ENCODE measurements at regions of chr3 and their contacts with region 1.

Region 1: GRCh38 chr3:44729384-44729910 is at the start of gene ZNF501:
- DNase-seq: peak; percentile 85 to 97 (median 92)
- H3K4me3 ChIP-seq: peak within 1 kb of the TSS; percentile 50 to 92 (median 77)
- H3K27ac ChIP-seq: peak within 1 kb of the TSS in 8 of 59 donors; percentile 1 to 61 (median 30)
- H3K27me3 ChIP-seq: no peaks in the 10 kb centered on the region
- CTCF ChIP-seq: peak in 24 of 56 donors; percentile 7 to 50 (median 21)
- total RNA-seq, gene ZNF501: 2.2 to 12.3 (median 6.1) TPM

Region 2: GRCh38 chr3:44712455-44713075 is 16.9 kb before region 1 on chr3 and contains the start of gene ZNF502:
- intact Hi-C with region 1: loop called (anchors 1 kb)
- DNase-seq: peak; percentile 86 to 95 (median 92)
- H3K4me3 ChIP-seq: peak within 1 kb of the TSS; percentile 54 to 99 (median 84)
- H3K27ac ChIP-seq: peak within 1 kb of the TSS in 26 of 59 donors; percentile 1 to 81 (median 50)
- H3K27me3 ChIP-seq: peaks cover 0 to 11% (median 0%) of the 10 kb centered on the region in 45 donors
- CTCF ChIP-seq: peak in 51 of 56 donors; percentile 22 to 65 (median 44)
- total RNA-seq, gene ZNF502: 2.8 to 9.2 (median 5.1) TPM

Region 3: GRCh38 chr3:44833394-44833793 is 103.9 kb after region 1 on chr3:
- intact Hi-C with region 1: no loop called
- DNase-seq: no peak
- H3K4me3 ChIP-seq: no peak overlapping the region
- H3K27ac ChIP-seq: no peak overlapping the region
- H3K27me3 ChIP-seq: no peaks in the 10 kb centered on the region
- CTCF ChIP-seq: no peak

Measured in dorsolateral prefrontal cortex (tissue), 120 donors.